ENCODE measurements at regions of chr1 and their contacts with region 1.

Region 1: GRCh38 chr1:37449936-37450335 is 24.4 kb upstream of the ZC3H12A start:
- DNase-seq: no peak
- H3K4me3 ChIP-seq: no peak overlapping the region
- H3K4me3 Mint-ChIP-seq: no peak overlapping the region
- H3K27ac Mint-ChIP-seq: no peak overlapping the region
- H3K4me1 ChIP-seq: no peaks in the 10 kb centered on the region
- H3K4me1 Mint-ChIP-seq: no peaks in the 10 kb centered on the region
- H3K27me3 ChIP-seq: no peaks in the 10 kb centered on the region
- H3K27me3 Mint-ChIP-seq: peaks cover 12% of the 10 kb centered on the region
- CTCF ChIP-seq: no peak

Region 2: DNA sequence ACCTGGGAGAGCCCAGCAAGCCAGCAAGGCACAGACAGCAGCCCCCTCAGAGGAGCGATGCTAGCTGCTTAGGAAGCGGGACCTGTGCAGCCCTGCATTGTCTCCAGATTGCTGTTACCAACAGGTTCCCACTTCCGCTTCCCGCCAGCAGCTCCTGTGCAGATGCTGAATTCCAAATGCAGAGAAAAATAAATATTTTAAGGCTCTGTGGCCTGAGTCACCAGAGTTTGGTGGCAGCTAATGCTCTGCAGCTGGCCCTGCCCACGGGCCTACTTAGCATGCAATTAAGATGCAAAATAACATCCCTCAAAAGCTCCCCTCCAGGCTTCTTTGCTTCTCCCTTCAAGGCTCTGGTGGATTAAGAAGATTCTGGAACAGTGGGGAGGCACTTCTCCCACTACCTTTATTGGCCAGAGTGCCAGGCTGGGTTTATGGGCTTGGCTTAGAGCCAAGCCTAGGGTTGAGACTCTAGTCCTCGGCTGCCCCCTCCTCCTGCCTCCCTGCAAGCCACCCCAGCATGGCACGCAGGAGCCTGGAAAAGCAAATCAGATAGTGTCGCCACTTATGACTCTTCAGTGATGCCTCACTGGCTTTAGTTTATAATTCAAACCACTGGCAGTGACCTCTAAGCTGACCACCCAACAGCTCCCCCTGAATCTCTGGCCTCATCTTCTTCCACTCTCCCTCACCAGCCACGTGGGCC is 182.7 kb before region 1 on chr1:
- CTCF ChIA-PET with region 1: no interaction called
- POLR2A ChIA-PET with region 1: no interaction called
- intact Hi-C with region 1: no loop called
- DNase-seq: no peak
- H3K4me3 ChIP-seq: no peak overlapping the region
- H3K4me3 Mint-ChIP-seq: no peak overlapping the region
- H3K27ac Mint-ChIP-seq: no peak overlapping the region
- H3K4me1 ChIP-seq: no peaks in the 10 kb centered on the region
- H3K4me1 Mint-ChIP-seq: no peaks in the 10 kb centered on the region
- H3K27me3 ChIP-seq: no peaks in the 10 kb centered on the region
- H3K27me3 Mint-ChIP-seq: peaks cover 14% of the 10 kb centered on the region
- CTCF ChIP-seq: no peak

Region 3: DNA sequence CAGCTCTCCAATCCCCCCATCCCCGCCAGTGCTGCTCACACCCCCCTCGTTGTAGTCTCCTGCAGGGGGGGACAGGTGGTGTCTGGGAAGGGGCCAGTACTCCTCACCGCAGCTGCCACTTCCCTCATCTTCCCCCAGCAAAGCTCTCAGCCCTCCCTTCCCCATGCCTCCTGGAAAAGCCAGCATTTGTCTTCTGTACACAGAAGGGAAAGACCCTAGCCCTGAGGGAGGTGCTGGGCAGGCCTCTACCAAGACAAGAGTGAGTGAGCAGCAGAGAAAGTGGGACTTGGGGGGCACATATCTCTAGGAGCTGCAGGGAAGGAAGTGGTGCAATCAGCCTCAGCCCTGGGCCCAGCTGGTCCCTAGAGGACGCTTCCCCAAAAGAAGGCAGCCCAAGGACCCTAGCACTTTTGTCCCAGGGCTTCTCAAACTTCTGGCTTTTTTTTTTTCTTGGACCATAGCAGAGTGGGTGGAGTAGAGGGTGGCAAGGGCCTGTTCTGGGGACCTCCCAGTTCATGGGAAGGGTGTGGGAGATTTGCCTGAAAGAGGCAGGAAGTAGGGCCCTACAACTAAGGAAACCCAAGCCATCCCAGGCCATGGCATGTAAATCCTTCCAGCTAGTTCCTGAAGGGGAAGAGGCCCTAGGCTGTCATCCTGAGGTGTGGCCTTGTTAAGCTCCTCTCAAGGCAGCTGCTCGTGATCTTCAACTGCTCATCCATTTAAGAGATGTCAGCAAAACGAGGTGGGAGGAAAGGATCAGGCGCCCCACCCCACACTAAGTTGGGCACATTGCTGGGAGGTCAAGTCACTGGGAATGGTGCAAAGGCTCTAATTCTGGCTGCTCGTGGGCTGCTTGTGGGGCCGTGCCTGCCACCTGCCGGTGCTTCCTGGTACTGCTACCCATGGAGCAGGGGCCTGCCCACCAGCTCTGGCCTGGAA is 37.0 kb after region 1 on chr1:
- CTCF ChIA-PET with region 1: interaction called, 14 read pairs
- POLR2A ChIA-PET with region 1: no interaction called
- intact Hi-C with region 1: loop called (anchors 1 kb)
- DNase-seq: peak; percentile 56 to 75
- H3K4me3 ChIP-seq: no peak overlapping the region
- H3K4me3 Mint-ChIP-seq: no peak overlapping the region
- H3K27ac Mint-ChIP-seq: no peak overlapping the region
- H3K4me1 ChIP-seq: no peaks in the 10 kb centered on the region
- H3K4me1 Mint-ChIP-seq: no peaks in the 10 kb centered on the region
- H3K27me3 ChIP-seq: no peaks in the 10 kb centered on the region
- H3K27me3 Mint-ChIP-seq: no peaks in the 10 kb centered on the region
- CTCF ChIP-seq: peak; percentile 82 to 90

Region 4: GRCh38 chr1:37549341-37549740 is 99.4 kb after region 1 on chr1:
- CTCF ChIA-PET with region 1: no interaction called
- POLR2A ChIA-PET with region 1: interaction called, 12 read pairs
- intact Hi-C with region 1: no loop called
- DNase-seq: no peak
- H3K4me3 ChIP-seq: no peak overlapping the region
- H3K4me3 Mint-ChIP-seq: no peak overlapping the region
- H3K27ac Mint-ChIP-seq: no peak overlapping the region
- H3K4me1 ChIP-seq: 0 out of 2 replicates have a peak, but pooled peaks cover 4% of the 10 kb centered on the region
- H3K4me1 Mint-ChIP-seq: peaks cover 9% of the 10 kb centered on the region
- H3K27me3 ChIP-seq: no peaks in the 10 kb centered on the region
- H3K27me3 Mint-ChIP-seq: no peaks in the 10 kb centered on the region
- CTCF ChIP-seq: no peak

Measured in Caco-2 (cell line).